Left ventricle myocardium superior (tissue), 1 donor: ENCODE measurements at regions of chr2 and their contacts with region 1.

Region 1: GRCh38 chr2:100381240-100381639 is 36.2 kb downstream of the CHST10 start:
- DNase-seq: peak; percentile 65
- ATAC-seq: peak; percentile 71

Region 2: GRCh38 chr2:100262555-100263320 is 118.5 kb before region 1 on chr2:
- intact Hi-C with region 1: loop called (anchors 10 kb)
- DNase-seq: peak; percentile 77
- ATAC-seq: peak; percentile 75

Region 3: DNA sequence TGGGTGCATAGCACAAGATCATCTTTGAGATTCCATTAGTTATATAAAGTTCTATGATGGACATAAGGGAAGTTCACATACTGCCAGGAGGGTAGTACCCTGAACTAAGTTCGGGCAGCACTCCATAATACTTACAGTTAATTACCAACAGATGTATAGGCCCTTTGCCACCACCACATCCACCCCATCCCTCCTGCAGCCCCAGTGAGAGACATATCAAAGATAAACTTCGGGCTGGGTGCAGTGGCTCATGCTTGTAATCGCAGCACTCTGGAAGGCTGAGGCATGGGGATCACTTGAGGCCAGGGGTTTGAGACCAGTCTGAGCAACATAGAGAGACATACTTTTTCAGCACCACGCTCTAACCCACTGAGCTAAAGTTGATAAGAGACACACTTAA is 392.3 kb after region 1 on chr2:
- intact Hi-C with region 1: no loop called
- DNase-seq: no peak
- ATAC-seq: no peak